A549 (cell line): ENCODE measurements at regions of chr1 and their contacts with region 1.

Region 1: GRCh38 chr1:168342572-168343280 is 62.0 kb downstream of the TBX19 start:
- DNase-seq: peak; percentile 43 to 88
- ATAC-seq: peak; percentile 98 to 99
- H3K4me3 ChIP-seq: peak overlapping the region; percentile 32
- H3K27ac ChIP-seq: peak overlapping the region; percentile 51 to 71
- H3K4me1 ChIP-seq: peaks cover 13% of the 10 kb centered on the region; the same call in 1 of the 3 replicates
- CTCF ChIP-seq: peak; percentile 84
- EP300 ChIP-seq: no peak
- POLR2A ChIP-seq: no peak
- RAD21 ChIP-seq: peak; percentile 88 to 92

Region 2: DNA sequence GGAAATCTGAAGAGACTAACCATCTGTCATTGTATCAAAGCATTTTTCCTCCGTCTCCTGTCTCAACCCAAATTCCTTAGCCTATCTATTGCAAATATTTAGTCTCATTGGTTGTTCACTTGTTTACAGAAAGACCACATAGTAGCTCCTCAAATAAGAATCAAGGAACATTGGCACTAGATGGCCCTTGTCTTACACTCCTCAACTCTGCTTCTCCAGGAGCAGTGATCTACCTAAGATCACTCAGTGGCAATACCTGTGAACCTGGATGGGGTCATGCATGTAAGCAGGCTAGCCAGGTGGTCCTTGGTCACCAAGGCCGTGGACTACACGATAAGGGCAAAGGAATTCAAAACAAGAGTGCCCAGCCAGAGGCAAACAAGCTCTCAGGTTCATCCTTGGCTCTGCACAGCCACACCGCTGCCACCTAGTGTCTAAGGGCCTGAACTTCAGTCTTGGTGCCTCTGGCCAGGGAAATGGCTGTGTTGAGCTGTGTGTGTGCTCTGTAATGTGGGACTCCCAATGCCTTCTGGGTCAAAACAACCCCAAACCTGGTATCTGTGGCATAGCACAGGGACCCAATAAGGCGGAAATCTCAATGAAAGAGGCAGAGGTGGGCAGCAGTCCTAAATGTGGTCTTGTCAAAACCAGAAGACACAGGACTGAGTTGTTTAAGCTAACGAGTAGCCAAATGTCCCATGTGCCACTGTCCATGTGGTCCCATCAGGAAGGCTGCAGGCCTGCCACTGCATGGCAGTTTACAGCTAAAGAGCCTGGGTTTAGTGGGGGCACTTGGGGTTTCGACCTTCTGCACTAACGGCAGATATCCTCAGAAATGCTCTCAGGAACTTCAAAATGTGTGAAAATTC is 260.5 kb before region 1 on chr1:
- CTCF ChIA-PET with region 1: interaction called, 10 read pairs
- POLR2A ChIA-PET with region 1: no interaction called
- DNase-seq: peak; percentile 75 to 77
- ATAC-seq: peak; percentile 89 to 92
- H3K4me3 ChIP-seq: no peak overlapping the region
- H3K27ac ChIP-seq: no peak overlapping the region
- H3K4me1 ChIP-seq: no peaks in the 10 kb centered on the region
- CTCF ChIP-seq: peak; percentile 76
- EP300 ChIP-seq: no peak
- POLR2A ChIP-seq: no peak
- RAD21 ChIP-seq: peak; percentile 75 to 85

Region 3: DNA sequence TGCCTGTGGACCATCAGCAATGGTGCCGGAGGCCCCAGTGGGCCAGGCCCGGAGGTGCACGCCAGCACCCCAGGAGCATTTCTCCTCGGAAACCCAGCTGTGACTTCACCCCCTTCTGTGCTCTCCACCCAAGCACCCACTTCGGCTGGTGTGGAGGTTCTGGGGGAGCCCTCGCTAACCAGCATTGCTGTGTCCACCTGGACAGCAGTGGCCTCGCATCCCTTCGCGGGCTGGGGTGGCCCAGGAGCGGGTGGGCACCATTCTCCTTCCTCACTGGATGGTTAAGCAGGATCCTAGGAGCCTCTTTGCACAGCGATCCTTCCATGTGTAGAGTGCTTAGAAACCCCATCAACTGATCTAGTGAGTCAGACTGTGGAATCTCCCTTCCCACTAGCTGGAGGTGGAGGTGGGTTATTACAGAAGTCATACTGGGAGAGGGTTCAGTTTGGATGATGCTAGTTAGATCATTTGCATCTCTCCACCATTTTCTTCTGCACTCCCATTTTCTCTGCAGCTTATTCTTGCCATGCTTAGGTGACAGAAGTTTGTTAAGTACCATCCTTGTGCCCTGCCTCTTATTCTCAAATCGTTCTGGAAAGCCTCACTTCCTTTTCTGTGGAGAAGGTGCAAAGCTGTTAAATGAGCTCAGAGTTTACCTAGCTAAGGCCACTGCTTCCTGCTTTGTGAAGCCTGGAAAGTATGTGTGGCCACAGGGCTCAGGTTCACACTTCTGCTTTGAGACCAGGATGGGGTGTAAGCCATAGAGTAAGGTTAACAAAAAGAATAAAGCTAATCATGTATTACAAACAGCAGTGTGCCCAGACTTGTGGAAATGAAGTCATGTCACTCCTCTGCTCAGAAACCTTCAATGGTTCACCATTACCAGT is 29.8 kb before region 1 on chr1:
- CTCF ChIA-PET with region 1: interaction called, 10 read pairs
- POLR2A ChIA-PET with region 1: no interaction called
- DNase-seq: no peak
- ATAC-seq: peak in 1 of 2 experiments; percentile 51; a peak in 2 of 6 replicates
- H3K4me3 ChIP-seq: no peak overlapping the region
- H3K27ac ChIP-seq: peak overlapping the region in 1 of 2 experiments; percentile 26; a peak in 1 of 6 replicates
- H3K4me1 ChIP-seq: no peaks in the 10 kb centered on the region
- CTCF ChIP-seq: no peak
- EP300 ChIP-seq: no peak
- POLR2A ChIP-seq: no peak
- RAD21 ChIP-seq: no peak

Region 4: DNA sequence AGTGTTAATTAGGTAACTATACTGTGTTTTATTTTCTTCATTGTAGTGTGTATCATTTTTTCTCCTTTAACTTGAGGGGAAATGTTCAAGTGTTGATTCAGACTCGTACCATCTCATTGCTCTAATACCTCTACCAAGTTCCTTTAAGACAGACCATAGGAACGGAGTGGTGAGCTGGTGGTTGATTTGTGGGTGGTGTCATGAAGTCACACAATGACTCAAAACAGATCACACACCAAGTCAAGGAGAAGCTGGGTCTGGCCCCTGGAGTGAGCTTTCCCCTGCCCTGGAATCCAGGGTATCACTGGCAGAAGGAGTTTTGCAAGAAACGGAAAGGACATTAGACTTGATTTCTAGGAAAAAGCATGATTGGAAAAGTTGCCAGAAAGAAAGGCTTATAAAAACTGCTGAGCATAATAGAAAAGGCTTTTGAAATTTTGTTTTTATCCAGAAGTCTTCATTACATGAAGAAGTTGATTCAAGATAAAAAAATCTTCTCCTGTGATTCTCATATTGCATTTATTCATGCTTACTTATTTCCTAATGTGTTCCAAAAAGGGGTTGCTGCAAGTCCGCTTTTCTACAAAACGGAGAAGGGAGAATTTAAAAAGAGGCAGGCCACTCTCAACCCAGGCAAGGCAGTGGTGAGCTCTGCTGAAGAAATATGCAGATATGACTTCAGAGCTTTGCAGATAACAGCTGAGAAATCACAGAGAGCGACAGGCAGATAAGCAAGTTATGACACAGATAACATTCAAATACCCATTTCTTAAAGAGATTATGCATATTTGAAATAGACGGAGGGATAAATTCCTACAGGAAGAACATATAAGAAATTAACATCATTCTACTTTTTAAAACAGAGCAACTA is 17.7 kb after region 1 on chr1:
- CTCF ChIA-PET with region 1: interaction called, 18 read pairs
- POLR2A ChIA-PET with region 1: no interaction called
- DNase-seq: no peak
- ATAC-seq: no peak
- H3K4me3 ChIP-seq: no peak overlapping the region
- H3K27ac ChIP-seq: no peak overlapping the region
- H3K4me1 ChIP-seq: no peaks in the 10 kb centered on the region
- CTCF ChIP-seq: no peak
- EP300 ChIP-seq: no peak
- POLR2A ChIP-seq: no peak
- RAD21 ChIP-seq: no peak

Region 5: DNA sequence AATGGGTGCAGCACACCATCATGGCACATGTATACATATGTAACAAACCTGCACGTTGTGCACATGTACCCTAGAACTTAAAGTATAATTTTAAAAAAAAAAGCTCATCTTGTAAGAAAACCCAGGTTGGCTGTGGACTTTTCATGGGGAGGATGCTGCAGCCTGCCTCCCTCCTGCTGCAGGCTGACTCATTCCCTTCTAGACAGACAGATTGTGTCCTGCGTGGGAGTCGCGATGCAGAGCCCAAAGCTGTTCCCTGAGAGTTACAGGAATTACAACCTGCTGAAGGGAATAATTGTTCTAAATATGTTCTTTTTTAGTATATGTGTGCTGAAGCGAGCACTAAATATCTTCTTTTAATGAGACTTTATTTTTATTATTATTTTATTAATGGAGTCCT is 31.1 kb after region 1 on chr1:
- CTCF ChIA-PET with region 1: interaction called, 18 read pairs
- POLR2A ChIA-PET with region 1: no interaction called
- DNase-seq: no peak
- ATAC-seq: no peak
- H3K4me3 ChIP-seq: no peak overlapping the region
- H3K27ac ChIP-seq: no peak overlapping the region
- H3K4me1 ChIP-seq: peaks cover 2% of the 10 kb centered on the region; the same call in 1 of the 3 replicates
- CTCF ChIP-seq: no peak
- EP300 ChIP-seq: no peak
- POLR2A ChIP-seq: no peak
- RAD21 ChIP-seq: no peak

Region 6: DNA sequence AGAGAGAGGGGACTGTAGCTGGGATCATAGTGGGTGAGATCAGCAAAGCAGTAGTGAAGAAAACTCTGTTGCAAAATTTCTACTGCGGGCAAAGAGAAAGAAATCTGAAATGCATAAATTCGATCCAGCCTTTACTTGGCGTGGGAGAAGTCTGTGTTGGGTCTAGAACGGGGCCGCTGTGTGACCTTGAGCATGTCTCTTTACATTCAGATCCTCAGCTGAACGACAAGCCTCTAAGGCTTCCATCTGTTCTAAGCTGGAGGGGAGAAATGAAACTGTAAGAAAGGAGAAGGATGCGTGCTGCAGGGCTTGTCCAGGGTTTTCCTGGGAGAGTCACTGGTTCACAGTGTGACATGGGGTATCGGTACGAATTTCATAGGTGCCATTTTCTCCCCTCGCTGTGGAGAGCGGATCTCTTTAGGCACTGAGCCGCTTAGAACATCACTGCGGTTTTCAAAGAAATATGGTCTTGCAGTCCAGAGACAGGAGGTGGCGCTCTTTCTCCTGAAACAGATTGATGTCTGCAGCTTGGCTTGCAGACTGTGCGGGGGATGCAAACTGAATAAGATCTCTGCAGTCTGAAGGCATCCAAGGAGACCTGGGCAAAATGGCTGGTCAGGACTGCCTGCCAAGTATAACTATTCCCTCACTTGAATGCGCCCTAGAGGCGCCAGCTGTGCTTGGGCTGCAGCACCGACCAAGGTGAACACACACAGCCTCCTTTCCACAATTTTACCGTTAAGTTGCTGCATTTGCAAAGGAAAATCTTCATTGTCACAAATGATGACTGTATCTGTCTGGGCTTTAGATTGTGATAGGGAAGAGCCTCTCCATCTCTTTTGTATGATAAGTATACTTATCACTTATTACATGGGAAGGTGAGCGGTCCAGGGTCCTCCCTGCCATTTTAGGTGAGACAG is 97.0 kb after region 1 on chr1:
- CTCF ChIA-PET with region 1: interaction called, 47 read pairs
- POLR2A ChIA-PET with region 1: interaction called, 6 read pairs
- DNase-seq: peak; percentile 60 to 86
- ATAC-seq: peak; percentile 95 to 99
- H3K4me3 ChIP-seq: no peak overlapping the region
- H3K27ac ChIP-seq: peak overlapping the region; percentile 10 to 61; a peak in 3 of 6 replicates
- H3K4me1 ChIP-seq: no peaks in the 10 kb centered on the region
- CTCF ChIP-seq: peak; percentile 92
- EP300 ChIP-seq: no peak
- POLR2A ChIP-seq: no peak
- RAD21 ChIP-seq: peak; percentile 96

Region 7: GRCh38 chr1:168466092-168466713 is 123.5 kb after region 1 on chr1:
- CTCF ChIA-PET with region 1: no interaction called
- POLR2A ChIA-PET with region 1: no interaction called
- DNase-seq: no peak
- ATAC-seq: no peak
- H3K4me3 ChIP-seq: no peak overlapping the region
- H3K27ac ChIP-seq: no peak overlapping the region
- H3K4me1 ChIP-seq: peaks cover 38% of the 10 kb centered on the region
- CTCF ChIP-seq: no peak
- EP300 ChIP-seq: no peak
- POLR2A ChIP-seq: no peak
- RAD21 ChIP-seq: no peak

Region 8: GRCh38 chr1:169348383-169349036 is 1005.8 kb after region 1 on chr1:
- CTCF ChIA-PET with region 1: interaction called, 21 read pairs
- POLR2A ChIA-PET with region 1: no interaction called
- DNase-seq: peak in 1 of 2 experiments; percentile 65
- ATAC-seq: peak in 1 of 2 experiments; percentile 68; a peak in 3 of 6 replicates
- H3K4me3 ChIP-seq: no peak overlapping the region
- H3K27ac ChIP-seq: peak overlapping the region in 1 of 2 experiments; percentile 23; a peak in 3 of 6 replicates
- H3K4me1 ChIP-seq: peaks cover 16% of the 10 kb centered on the region
- CTCF ChIP-seq: peak; percentile 91
- EP300 ChIP-seq: no peak
- POLR2A ChIP-seq: no peak
- RAD21 ChIP-seq: peak; percentile 97